Gastrocnemius medialis (tissue), 4 donors: ENCODE measurements at regions of chr4 and their contacts with region 1.

Region 1: DNA sequence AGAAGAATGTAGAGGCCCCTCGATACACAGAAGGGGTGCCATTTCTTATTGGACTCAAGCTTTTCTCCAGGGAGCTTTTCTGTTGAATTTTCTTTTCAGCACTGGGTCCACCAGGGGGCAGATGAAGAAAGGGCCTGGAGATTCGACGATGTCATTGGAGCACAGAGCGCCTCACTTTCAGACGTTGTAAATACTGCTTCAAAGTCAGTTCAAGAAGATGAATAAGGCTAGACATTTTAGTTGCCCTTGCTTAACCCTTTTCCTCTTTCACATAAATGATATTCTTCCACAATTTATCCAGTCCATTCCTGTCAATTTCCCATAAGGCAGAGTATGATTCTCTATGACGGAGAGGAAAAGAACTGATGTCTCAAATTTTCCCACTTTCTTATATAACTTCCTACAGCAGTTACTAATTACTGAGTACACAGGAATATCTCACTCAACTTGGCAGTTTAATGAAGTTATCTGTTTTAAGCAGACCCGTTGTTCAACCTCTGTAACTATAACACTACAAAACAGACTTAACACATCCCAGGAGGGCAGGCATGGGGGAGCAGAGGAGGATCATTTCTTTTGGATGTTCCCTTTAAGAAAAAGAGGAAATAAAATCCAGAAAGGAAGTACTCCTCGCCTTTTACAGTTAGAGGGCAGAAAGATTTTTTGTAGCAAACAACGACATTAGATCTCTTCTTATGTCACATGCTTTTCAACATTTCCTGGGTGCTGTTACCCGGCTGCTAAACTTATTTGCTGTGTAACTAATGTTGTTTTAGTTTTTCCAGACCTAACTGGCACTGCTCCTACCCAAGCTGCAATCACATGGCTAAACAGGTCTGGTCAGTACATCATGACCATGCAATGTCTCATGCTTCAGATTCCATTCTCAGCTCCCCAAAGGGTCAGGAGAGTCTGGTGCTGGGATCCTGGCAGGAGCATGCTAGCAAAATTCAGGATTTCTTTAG is 12.2 kb upstream of the CENPU start:
- DNase-seq: peak; percentile 67 to 72
- ATAC-seq: peak; percentile 59 to 61
- H3K4me3 ChIP-seq: peak overlapping the region in 2 of 4 donors; percentile 7 to 15
- H3K27ac ChIP-seq: peak overlapping the region; percentile 74 to 85 (median 79)
- H3K4me1 ChIP-seq: peaks cover 29 to 31% of the 10 kb centered on the region in 2 donors
- H3K27me3 ChIP-seq: no peaks in the 10 kb centered on the region
- CTCF ChIP-seq: peak; percentile 65 to 79 (median 77)
- POLR2A ChIP-seq: peak in 1 of 2 donors; percentile 13

Region 2: DNA sequence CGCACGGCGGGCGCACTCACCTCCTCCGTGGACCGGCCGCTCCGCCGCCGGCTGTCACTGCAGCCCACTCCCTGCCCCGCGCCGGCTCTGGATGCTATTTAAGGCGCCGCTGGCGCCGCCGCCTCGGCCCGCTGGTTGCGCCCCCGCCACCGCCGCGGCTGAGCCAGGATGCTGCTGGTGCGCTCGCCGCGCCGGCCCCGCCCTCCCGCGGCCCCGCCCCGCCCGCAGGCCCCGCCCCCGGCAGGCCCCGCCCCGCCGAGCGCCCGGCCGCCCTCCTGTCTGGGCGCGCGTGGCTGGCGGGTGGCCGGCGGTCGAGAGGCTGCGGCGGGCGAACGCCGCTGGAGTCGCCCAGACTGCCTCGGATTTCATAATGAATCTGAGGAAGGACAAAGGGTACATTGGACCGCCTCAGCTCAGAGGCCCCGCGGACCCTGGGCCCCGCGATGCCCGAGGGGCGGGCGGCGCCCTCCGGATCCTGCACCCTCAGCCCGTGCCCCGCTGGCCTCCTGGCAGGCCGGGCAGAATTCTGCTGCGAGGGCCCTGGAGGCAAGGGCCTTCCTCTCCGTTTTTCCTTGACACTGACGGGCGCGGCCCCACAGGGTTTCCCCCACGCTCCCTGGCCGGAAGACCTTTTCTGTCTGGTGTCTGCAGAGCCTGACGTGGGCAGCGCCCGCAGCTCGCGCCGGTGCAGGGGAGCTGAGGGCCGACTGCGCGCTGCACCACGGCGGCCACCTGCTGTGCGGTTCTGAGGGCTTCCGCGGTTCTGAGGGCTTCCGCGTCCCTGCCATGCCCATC is 80.0 kb after region 1 on chr4 and contains the start of gene ACSL1:
- in situ Hi-C with region 1: loop called in 1 of 4 experiments (anchors 5 kb)
- intact Hi-C with region 1: loop called (anchors 2 kb)
- DNase-seq: peak; percentile 80 to 91
- ATAC-seq: peak; percentile 74 to 76
- H3K4me3 ChIP-seq: peak within 1 kb of the TSS; percentile 64 to 91 (median 73)
- H3K27ac ChIP-seq: peak within 1 kb of the TSS; percentile 97 to 100 (median 98)
- H3K4me1 ChIP-seq: peaks cover 36 to 42% of the 10 kb centered on the region in 2 donors
- H3K27me3 ChIP-seq: no peaks in the 10 kb centered on the region
- CTCF ChIP-seq: no peak
- POLR2A ChIP-seq: peak; percentile 99
- total RNA-seq, gene ACSL1: 591 to 2,181 (median 1,316) TPM

Region 3: DNA sequence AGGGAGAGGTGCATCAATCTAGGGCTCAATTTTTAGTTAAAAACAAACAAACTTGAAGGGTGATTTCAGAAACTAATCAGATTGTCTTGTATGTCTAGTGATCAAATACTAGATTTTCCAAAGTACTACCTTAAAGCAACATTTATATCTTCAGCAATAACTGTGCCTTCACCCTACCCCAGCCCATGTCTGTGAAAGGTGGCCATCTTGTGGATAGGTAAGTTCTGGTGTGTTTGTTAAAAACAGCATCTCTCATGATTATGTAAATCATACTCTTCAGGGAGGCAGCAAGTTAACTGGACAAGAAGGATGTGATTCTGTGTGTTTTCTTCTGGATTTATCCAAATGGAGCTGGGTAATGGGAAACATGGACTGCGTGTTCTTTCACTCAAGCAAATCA is 161.1 kb after region 1 on chr4:
- in situ Hi-C with region 1: no loop called
- intact Hi-C with region 1: loop called (anchors 5 kb)
- DNase-seq: no peak
- ATAC-seq: no peak
- H3K4me3 ChIP-seq: no peak overlapping the region
- H3K27ac ChIP-seq: no peak overlapping the region
- H3K4me1 ChIP-seq: no peaks in the 10 kb centered on the region
- H3K27me3 ChIP-seq: no peaks in the 10 kb centered on the region
- CTCF ChIP-seq: peak in 1 of 5 experiments; percentile 24
- POLR2A ChIP-seq: no peak

Region 4: DNA sequence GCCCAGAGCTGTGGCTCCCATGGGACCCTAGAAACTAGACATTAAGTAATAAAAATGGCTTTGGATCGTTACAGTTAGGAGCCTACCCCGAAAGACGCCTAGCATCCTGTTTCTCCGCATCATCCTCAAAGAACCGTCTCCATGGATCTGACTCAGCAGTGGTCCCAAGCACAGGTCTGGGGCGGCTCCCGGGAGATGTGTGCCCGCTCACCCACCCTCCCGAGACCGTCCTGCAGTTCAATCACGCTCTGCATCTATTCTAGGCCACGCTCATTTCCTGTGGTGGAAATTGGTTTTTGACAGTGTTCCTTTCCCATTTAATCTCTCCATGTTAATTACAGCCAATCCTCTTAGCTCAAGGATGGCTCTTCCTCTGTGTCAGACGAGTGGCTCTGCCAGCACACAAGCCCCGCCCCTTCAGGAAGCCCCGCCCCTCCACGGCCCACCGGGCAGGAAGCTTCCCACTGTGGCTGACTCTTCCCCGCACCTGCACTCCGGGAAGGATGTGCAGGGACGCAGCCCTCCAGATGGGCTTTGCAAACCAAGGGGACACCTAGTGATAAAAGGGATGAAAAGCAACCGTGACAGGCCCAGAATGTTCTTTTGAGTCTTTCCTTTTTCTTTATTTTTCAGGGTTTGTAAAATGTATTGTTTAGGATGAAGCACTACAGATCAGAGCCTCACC is 237.7 kb after region 1 on chr4:
- in situ Hi-C with region 1: loop called in 3 of 4 experiments (anchors 25 kb)
- intact Hi-C with region 1: loop called (anchors 2 kb)
- DNase-seq: peak; percentile 6 to 44
- ATAC-seq: peak in 1 of 2 donors; percentile 62
- H3K4me3 ChIP-seq: no peak overlapping the region
- H3K27ac ChIP-seq: no peak overlapping the region
- H3K4me1 ChIP-seq: no peaks in the 10 kb centered on the region
- H3K27me3 ChIP-seq: no peaks in the 10 kb centered on the region
- CTCF ChIP-seq: peak in 4 of 5 experiments; percentile 21 to 43 (median 33)
- POLR2A ChIP-seq: no peak

Region 5: GRCh38 chr4:185096032-185096653 is 350.0 kb after region 1 on chr4:
- in situ Hi-C with region 1: no loop called
- intact Hi-C with region 1: loop called (anchors 5 kb)
- DNase-seq: no peak
- ATAC-seq: peak in 1 of 2 donors; percentile 68
- H3K4me3 ChIP-seq: no peak overlapping the region
- H3K27ac ChIP-seq: no peak overlapping the region
- H3K4me1 ChIP-seq: no peaks in the 10 kb centered on the region
- H3K27me3 ChIP-seq: no peaks in the 10 kb centered on the region
- CTCF ChIP-seq: peak; percentile 29 to 67 (median 41)
- POLR2A ChIP-seq: no peak

Region 6: DNA sequence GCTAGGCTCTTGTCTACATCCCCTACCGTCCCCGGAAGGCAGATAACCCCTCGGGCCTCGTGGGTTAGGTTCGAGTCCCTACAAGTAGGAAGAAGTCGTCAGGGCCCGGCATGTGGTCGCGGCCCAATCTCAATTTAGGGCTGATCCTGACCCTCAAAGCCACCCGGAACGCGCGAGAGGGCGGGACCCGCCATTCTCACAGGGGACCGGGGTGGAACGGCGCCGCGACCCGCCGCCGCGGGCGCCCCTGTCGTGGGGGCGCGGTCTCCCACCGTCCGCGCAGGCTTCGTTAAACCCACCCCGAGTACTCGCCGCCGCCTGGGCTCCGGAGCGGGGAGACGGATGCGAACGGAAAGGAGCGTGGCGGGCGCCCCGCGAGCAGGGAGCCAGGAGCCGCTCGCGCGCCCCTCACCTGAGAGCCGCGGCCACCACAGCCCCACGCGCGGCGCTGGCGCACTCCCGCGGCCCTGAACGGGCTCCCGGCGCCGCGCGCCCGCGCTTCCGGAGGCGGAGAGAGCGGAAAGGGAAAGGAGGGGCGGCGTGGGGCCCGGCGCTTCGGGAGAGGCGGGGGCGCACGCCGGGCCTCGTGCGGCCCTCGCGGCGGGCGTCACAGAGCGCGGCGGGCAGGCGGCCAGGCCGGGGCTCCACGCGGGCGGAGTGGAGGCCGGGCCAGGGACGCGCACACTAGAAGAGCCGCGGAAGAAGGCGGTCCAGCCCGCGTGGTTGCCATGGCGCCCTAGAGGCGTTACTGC is 457.5 kb after region 1 on chr4 and contains the start of gene CFAP97:
- in situ Hi-C with region 1: no loop called
- intact Hi-C with region 1: loop called (anchors 10 kb)
- DNase-seq: peak; percentile 70 to 79
- ATAC-seq: peak; percentile 87 to 89
- H3K4me3 ChIP-seq: peak within 1 kb of the TSS; percentile 63 to 87 (median 74)
- H3K27ac ChIP-seq: peak within 1 kb of the TSS; percentile 85 to 99 (median 97)
- H3K4me1 ChIP-seq: peaks cover 10 to 25% of the 10 kb centered on the region in 2 donors
- H3K27me3 ChIP-seq: no peaks in the 10 kb centered on the region
- CTCF ChIP-seq: peak in 2 of 5 experiments; percentile 10 to 13
- POLR2A ChIP-seq: peak; percentile 84 to 87
- total RNA-seq, gene CFAP97: 6.5 to 14.1 (median 10.8) TPM